ENCODE measurements at regions of chr22 and their contacts with region 1.

Region 1: DNA sequence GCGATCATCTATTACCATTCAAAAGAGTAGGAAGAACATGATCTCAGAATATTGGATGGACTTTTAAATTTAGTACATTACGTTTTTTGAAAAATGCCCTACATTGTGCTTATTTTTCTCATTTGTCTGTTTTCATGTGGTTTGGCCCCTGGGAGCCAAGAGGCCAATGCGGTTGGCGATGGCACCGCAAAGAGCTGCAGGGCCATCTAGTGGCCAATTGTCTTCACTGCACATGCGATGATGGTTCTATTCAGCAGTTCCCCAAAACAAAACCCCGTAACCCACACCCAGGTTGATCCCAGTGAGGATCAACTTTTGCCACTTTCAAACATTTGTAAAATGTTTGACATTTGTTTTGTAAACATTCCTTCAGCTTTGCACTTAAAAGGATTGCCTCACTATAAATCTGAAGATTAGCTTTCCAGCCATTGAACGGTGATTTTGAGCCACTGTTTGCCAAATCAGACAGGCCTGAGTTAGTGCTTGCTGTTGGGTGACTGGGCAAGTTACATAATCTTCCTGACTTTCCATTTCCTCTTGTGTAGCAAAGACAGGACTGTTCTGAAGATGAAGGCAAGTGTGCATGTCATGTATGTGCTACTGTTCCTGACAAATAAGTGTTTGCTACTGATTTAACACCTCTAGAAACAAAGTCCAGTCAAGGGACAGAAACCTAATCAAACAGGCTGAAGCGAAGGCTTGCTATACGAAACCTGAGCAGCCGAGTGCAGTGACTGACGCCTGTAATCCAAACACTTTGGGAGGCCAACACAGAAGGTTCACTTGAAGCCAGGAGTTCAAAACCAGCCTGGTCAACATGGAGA is 29.2 kb upstream of the XBP1 start:
- DNase-seq: peak; percentile 52 to 87 (median 75)
- ATAC-seq: peak; percentile 83
- H3K4me3 ChIP-seq: no peak overlapping the region
- H3K4me3 Mint-ChIP-seq: no peak overlapping the region
- H3K27ac ChIP-seq: no peak overlapping the region
- H3K27ac Mint-ChIP-seq: no peak overlapping the region
- H3K4me1 ChIP-seq: peaks cover 10% of the 10 kb centered on the region
- H3K4me1 Mint-ChIP-seq: peaks cover 14% of the 10 kb centered on the region
- H3K27me3 ChIP-seq: no peaks in the 10 kb centered on the region
- H3K27me3 Mint-ChIP-seq: no peaks in the 10 kb centered on the region
- CTCF ChIP-seq: peak; percentile 99

Region 2: DNA sequence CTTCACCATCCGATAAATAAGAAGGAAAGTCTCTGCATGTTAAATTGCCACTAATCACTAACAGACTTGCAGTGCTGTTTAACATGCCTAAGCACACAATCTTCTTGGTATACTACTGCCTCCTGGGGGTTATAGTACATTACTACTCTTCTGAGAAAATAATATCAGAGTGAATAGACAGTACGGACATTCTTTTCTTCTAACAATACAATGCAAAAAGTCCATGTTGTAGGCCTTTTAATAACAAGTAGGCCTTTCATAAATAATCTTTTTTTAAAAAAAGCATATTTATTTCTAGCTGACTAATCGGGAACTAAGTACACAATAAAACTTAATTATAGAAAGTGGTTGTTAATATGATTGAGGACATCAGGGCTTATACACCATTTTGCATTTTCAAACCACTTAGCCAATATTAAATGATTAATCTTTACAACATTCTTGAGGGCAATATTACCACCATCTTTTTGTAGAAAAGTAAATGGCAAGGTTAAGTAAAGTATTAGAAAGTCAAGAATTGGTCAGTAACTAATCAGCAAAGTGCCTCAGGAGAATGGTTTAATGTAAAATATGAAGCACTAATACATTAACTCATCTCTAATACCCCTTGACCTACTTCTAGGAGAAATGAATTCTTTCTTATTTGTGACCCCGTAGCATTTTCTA is 234.6 kb before region 1 on chr22:
- CTCF ChIA-PET with region 1: interaction called, 139 read pairs
- POLR2A ChIA-PET with region 1: interaction called, 4 read pairs
- intact Hi-C with region 1: loop called (anchors 1 kb)
- DNase-seq: peak in 2 of 9 experiments; percentile 38 to 56
- ATAC-seq: peak; percentile 76
- H3K4me3 ChIP-seq: no peak overlapping the region
- H3K4me3 Mint-ChIP-seq: no peak overlapping the region
- H3K27ac ChIP-seq: no peak overlapping the region
- H3K27ac Mint-ChIP-seq: no peak overlapping the region
- H3K4me1 ChIP-seq: no peaks in the 10 kb centered on the region
- H3K4me1 Mint-ChIP-seq: no peaks in the 10 kb centered on the region
- H3K27me3 ChIP-seq: no peaks in the 10 kb centered on the region
- H3K27me3 Mint-ChIP-seq: peaks cover 21% of the 10 kb centered on the region
- CTCF ChIP-seq: peak; percentile 79

Region 3: GRCh38 chr22:28674121-28674563 is 155.4 kb before region 1 on chr22:
- CTCF ChIA-PET with region 1: interaction called, 3 read pairs
- POLR2A ChIA-PET with region 1: no interaction called
- intact Hi-C with region 1: loop called in 1 of 2 experiments (anchors 10 kb)
- DNase-seq: peak in 5 of 9 experiments; percentile 18 to 87 (median 66)
- ATAC-seq: peak; percentile 95
- H3K4me3 ChIP-seq: no peak overlapping the region
- H3K4me3 Mint-ChIP-seq: peak overlapping the region; percentile 65
- H3K27ac ChIP-seq: no peak overlapping the region
- H3K27ac Mint-ChIP-seq: peak overlapping the region; percentile 93
- H3K4me1 ChIP-seq: peaks cover 23% of the 10 kb centered on the region
- H3K4me1 Mint-ChIP-seq: peaks cover 24% of the 10 kb centered on the region
- H3K27me3 ChIP-seq: peaks cover 26 to 48% of the 10 kb centered on the region in 2 experiments
- H3K27me3 Mint-ChIP-seq: peaks cover 59% of the 10 kb centered on the region
- CTCF ChIP-seq: no peak

Region 4: GRCh38 chr22:28791841-28792490 is 37.6 kb before region 1 on chr22:
- CTCF ChIA-PET with region 1: interaction called, 125 read pairs
- POLR2A ChIA-PET with region 1: interaction called, 5 read pairs
- intact Hi-C with region 1: loop called (anchors 1 kb)
- DNase-seq: no peak
- ATAC-seq: no peak
- H3K4me3 ChIP-seq: no peak overlapping the region
- H3K4me3 Mint-ChIP-seq: no peak overlapping the region
- H3K27ac ChIP-seq: peak overlapping the region in 1 of 2 experiments; percentile 55
- H3K27ac Mint-ChIP-seq: peak overlapping the region; percentile 33
- H3K4me1 ChIP-seq: peaks cover 43% of the 10 kb centered on the region
- H3K4me1 Mint-ChIP-seq: peaks cover 56% of the 10 kb centered on the region
- H3K27me3 ChIP-seq: no peaks in the 10 kb centered on the region
- H3K27me3 Mint-ChIP-seq: no peaks in the 10 kb centered on the region
- CTCF ChIP-seq: no peak

Region 5: GRCh38 chr22:28817919-28818909 is 11.4 kb before region 1 on chr22:
- CTCF ChIA-PET with region 1: interaction called, 46 read pairs
- POLR2A ChIA-PET with region 1: interaction called, 14 read pairs
- intact Hi-C with region 1: no loop called
- DNase-seq: peak in 1 of 9 experiments; percentile 25
- ATAC-seq: no peak
- H3K4me3 ChIP-seq: no peak overlapping the region
- H3K4me3 Mint-ChIP-seq: no peak overlapping the region
- H3K27ac ChIP-seq: no peak overlapping the region
- H3K27ac Mint-ChIP-seq: no peak overlapping the region
- H3K4me1 ChIP-seq: peaks cover 64% of the 10 kb centered on the region
- H3K4me1 Mint-ChIP-seq: peaks cover 70% of the 10 kb centered on the region
- H3K27me3 ChIP-seq: no peaks in the 10 kb centered on the region
- H3K27me3 Mint-ChIP-seq: no peaks in the 10 kb centered on the region
- CTCF ChIP-seq: no peak

Region 6: GRCh38 chr22:28935713-28936112 is 106.1 kb after region 1 on chr22:
- CTCF ChIA-PET with region 1: no interaction called
- POLR2A ChIA-PET with region 1: no interaction called
- intact Hi-C with region 1: no loop called
- DNase-seq: peak in 2 of 9 experiments; percentile 10 to 14
- ATAC-seq: no peak
- H3K4me3 ChIP-seq: no peak overlapping the region
- H3K4me3 Mint-ChIP-seq: no peak overlapping the region
- H3K27ac ChIP-seq: no peak overlapping the region
- H3K27ac Mint-ChIP-seq: no peak overlapping the region
- H3K4me1 ChIP-seq: no peaks in the 10 kb centered on the region
- H3K4me1 Mint-ChIP-seq: no peaks in the 10 kb centered on the region
- H3K27me3 ChIP-seq: peaks cover 0 to 4% of the 10 kb centered on the region in 2 experiments
- H3K27me3 Mint-ChIP-seq: peaks cover 68% of the 10 kb centered on the region
- CTCF ChIP-seq: peak; percentile 19

Region 7: DNA sequence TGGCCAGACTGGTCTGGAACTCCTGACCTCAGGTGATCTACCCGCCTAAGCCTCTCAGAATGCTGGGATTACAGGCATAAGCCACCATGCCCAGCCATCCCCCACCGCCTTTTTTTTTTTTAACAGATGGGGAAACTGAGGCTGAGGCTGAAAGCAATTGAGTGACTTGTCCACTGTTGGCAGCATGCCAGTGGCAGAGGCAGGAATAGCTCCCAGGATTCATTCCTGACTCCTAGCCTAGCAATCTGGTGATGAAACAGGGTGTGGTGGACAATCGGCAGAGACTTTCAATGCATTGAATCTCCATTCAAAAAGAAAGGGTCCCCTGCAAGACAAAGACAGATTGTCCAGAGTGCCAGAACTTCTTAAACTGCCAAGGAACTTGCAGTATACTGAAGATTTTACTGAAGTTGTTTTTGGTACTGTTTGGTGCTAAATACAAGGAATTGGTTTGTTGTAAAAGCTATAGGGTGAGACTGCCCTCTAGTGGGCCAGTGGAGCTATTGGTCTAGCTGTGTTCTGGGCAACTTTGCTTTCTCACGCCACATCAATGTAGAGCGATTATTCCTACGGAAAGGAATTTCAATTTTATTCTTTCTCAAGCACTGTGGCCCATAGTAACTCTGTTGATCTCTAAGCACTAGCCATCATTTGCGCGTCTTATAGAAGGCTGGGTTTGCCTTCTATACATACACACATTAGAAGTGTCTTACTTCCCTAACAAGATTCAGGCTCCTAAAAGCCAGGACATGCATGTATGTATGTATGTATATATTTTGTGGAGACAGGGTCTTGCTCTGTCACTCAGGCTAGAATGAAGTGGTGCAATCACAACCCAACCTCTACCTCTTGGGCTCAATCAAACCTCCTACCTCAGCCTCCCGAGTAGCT is 211.1 kb after region 1 on chr22:
- CTCF ChIA-PET with region 1: interaction called, 26 read pairs
- POLR2A ChIA-PET with region 1: no interaction called
- intact Hi-C with region 1: loop called in 1 of 2 experiments (anchors 1 kb)
- DNase-seq: peak; percentile 22 to 82 (median 65)
- ATAC-seq: peak; percentile 63
- H3K4me3 ChIP-seq: no peak overlapping the region
- H3K4me3 Mint-ChIP-seq: no peak overlapping the region
- H3K27ac ChIP-seq: no peak overlapping the region
- H3K27ac Mint-ChIP-seq: no peak overlapping the region
- H3K4me1 ChIP-seq: no peaks in the 10 kb centered on the region
- H3K4me1 Mint-ChIP-seq: peaks cover 3% of the 10 kb centered on the region
- H3K27me3 ChIP-seq: peaks cover 0 to 4% of the 10 kb centered on the region in 2 experiments
- H3K27me3 Mint-ChIP-seq: peaks cover 7% of the 10 kb centered on the region
- CTCF ChIP-seq: peak; percentile 97

Region 8: DNA sequence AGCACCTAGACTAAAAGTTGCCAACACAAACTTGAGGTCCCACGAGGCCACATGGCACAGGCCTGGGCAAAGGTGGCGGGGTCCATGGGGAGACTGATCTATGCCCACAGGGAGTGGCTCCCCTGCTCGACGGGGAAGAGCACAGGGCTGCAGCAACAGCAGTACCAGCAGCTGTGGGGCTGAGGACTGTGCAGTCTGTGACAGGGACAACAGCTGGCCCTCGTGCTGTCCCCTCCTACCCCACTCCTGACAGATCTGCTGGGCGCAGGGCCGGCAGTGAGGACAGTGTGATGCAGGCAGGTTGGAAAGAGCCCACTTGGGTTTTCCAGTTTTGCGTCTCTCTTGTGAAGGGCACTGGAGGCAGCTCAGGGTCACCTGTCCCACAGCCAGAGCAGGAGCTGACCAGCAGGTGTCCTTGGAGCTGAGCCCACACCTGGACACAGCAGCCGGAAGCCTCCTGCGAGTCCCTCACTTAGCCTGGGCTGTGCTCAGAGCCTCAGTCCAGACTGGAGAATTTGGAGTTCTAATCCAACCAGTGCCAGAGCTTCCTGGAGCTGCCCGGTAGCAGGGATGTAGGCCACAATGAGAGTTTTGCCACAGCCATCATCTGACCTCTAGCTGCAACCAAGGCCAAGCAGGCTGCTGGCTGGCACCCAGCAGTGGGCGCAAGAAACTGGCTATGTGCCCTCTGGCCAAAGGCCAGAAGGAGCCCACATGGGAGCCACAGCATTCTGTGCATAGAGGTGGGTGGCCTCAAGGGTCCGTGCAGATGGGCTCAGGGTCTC is 473.3 kb after region 1 on chr22:
- CTCF ChIA-PET with region 1: no interaction called
- POLR2A ChIA-PET with region 1: no interaction called
- intact Hi-C with region 1: no loop called
- DNase-seq: no peak
- ATAC-seq: no peak
- H3K4me3 ChIP-seq: no peak overlapping the region
- H3K4me3 Mint-ChIP-seq: no peak overlapping the region
- H3K27ac ChIP-seq: no peak overlapping the region
- H3K27ac Mint-ChIP-seq: no peak overlapping the region
- H3K4me1 ChIP-seq: peaks cover 9% of the 10 kb centered on the region
- H3K4me1 Mint-ChIP-seq: peaks cover 8% of the 10 kb centered on the region
- H3K27me3 ChIP-seq: peaks cover 6 to 11% of the 10 kb centered on the region in 2 experiments
- H3K27me3 Mint-ChIP-seq: peaks cover 18% of the 10 kb centered on the region
- CTCF ChIP-seq: no peak

Measured in CD8-positive, alpha-beta T cell (primary cell).